Dorsolateral prefrontal cortex (tissue), 120 donors: ENCODE measurements at regions of chr2 and their contacts with region 1.

Region 1: GRCh38 chr2:43484323-43484930 is 111.4 kb downstream of the THADA start:
- DNase-seq: no peak
- H3K4me3 ChIP-seq: no peak overlapping the region
- H3K27ac ChIP-seq: peak overlapping the region in 1 of 59 donors; percentile 29
- H3K27me3 ChIP-seq: no peaks in the 10 kb centered on the region
- CTCF ChIP-seq: peak; percentile 40 to 93 (median 74)

Region 2: GRCh38 chr2:42810121-42810970 is 674.1 kb before region 1 on chr2:
- intact Hi-C with region 1: loop called in 1 of 2 experiments (anchors 5 kb)
- DNase-seq: peak; percentile 91 to 97 (median 94)
- H3K4me3 ChIP-seq: peak overlapping the region; percentile 56 to 92 (median 79)
- H3K27ac ChIP-seq: peak overlapping the region; percentile 93 to 100 (median 100)
- H3K27me3 ChIP-seq: no peaks in the 10 kb centered on the region
- CTCF ChIP-seq: peak in 11 of 56 donors; percentile 1 to 35 (median 7)

Region 3: GRCh38 chr2:42835577-42836371 is 648.7 kb before region 1 on chr2:
- intact Hi-C with region 1: loop called in 1 of 2 experiments (anchors 10 kb)
- DNase-seq: no peak
- H3K4me3 ChIP-seq: no peak overlapping the region
- H3K27ac ChIP-seq: peak overlapping the region in 1 of 59 donors; percentile 31
- H3K27me3 ChIP-seq: no peaks in the 10 kb centered on the region
- CTCF ChIP-seq: no peak

Region 4: DNA sequence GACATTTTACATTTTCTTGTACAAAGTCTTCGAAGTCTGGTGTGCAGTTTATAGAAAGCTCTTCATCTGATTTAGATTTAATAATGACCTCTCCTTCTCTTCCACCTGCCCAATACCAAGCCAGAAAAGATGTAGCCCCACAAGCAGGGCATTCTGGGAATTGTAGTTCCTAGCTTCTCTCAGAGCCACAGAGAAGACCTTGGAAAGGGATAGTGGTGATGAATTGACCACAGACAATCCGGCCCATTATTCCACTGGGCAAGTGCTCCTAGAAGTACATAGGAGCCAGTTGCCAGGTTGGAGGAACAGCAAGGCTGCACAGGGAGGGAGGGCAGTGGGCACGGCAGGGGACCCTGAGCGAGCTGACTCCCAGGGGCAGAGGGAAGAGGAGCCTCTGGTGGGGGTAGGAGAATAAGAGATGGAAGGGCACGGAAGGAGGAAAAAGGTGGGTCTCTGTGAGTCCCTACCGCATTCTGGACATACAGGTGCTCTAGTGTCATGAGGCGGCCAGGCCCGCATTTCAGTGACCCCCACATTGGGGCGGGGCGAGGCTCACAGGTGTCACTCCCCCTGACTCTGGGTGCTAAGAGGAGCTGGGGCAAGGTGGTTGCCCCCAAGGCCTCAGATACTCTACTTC is 539.5 kb before region 1 on chr2:
- intact Hi-C with region 1: loop called (anchors 5 kb)
- DNase-seq: no peak
- H3K4me3 ChIP-seq: no peak overlapping the region
- H3K27ac ChIP-seq: no peak overlapping the region
- H3K27me3 ChIP-seq: no peaks in the 10 kb centered on the region
- CTCF ChIP-seq: no peak

Region 5: GRCh38 chr2:43024515-43025011 is 459.9 kb before region 1 on chr2:
- intact Hi-C with region 1: loop called in 1 of 2 experiments (anchors 5 kb)
- DNase-seq: peak in 8 of 10 donors; percentile 47 to 78 (median 69)
- H3K4me3 ChIP-seq: no peak overlapping the region
- H3K27ac ChIP-seq: peak overlapping the region in 51 of 59 donors; percentile 0 to 93 (median 70)
- H3K27me3 ChIP-seq: no peaks in the 10 kb centered on the region
- CTCF ChIP-seq: peak; percentile 56 to 96 (median 83)

Region 6: DNA sequence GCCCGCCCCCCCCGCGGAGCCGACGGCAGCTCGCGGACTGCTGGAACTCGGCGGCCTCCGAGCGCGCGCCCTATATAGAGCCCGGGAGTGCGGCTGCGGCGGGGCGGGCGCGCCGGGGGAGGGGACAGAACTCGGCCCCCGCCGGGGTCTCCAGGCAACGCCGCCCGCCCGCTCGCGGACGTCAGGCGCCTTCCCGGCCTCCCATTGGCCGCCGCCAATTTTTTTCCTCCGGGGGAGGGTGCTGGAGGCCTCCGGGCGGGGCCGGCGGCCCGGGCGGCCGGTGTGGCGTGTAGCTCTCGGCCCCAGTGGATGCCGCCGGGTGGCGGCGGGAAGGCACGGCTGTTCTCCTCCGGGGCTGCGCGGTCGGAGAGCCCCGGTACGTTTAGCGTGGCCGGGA is 257.9 kb before region 1 on chr2 and contains the start of gene ZFP36L2:
- intact Hi-C with region 1: loop called (anchors 2 to 10 kb)
- DNase-seq: peak; percentile 71 to 98 (median 94)
- H3K4me3 ChIP-seq: peak within 1 kb of the TSS; percentile 51 to 93 (median 79)
- H3K27ac ChIP-seq: peak within 1 kb of the TSS; percentile 89 to 100 (median 98)
- H3K27me3 ChIP-seq: peaks cover 0 to 19% (median 0%) of the 10 kb centered on the region in 45 donors
- CTCF ChIP-seq: peak in 8 of 56 donors; percentile 4 to 26 (median 18)
- total RNA-seq, gene ZFP36L2: 13.0 to 86.0 (median 32.4) TPM

Region 7: DNA sequence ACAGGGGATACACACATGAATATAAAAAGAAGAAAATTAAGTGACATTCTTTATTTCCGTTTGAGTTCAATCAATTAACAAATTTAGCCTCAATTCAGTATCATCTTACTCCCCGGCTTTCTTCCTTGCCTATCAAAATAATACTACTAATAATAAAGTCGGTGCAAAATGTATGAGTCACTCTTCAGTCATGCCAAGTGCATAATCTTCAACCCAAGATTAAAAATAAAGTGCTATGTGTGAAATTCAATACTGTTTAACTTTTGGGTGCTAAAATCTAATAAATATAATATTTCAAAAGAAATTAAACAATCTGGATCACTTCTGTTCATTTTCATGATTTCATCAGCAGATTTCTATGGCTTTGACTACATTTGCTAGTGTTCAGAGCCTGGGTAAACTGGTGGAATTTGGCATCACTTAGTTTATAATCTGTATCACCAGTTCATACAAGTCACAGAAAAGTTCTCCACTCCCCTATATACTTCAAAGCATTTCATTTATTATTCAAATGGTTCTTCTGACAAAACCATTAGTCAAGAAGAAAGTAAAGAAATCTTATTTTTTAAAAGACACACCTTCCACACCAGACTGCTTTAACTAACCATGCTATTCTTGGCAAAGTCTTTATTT is 72.2 kb before region 1 on chr2:
- intact Hi-C with region 1: no loop called
- DNase-seq: no peak
- H3K4me3 ChIP-seq: no peak overlapping the region
- H3K27ac ChIP-seq: no peak overlapping the region
- H3K27me3 ChIP-seq: no peaks in the 10 kb centered on the region
- CTCF ChIP-seq: no peak